Heart left ventricle (tissue), 16 donors: ENCODE measurements at regions of chrX and their contacts with region 1.

Region 1: DNA sequence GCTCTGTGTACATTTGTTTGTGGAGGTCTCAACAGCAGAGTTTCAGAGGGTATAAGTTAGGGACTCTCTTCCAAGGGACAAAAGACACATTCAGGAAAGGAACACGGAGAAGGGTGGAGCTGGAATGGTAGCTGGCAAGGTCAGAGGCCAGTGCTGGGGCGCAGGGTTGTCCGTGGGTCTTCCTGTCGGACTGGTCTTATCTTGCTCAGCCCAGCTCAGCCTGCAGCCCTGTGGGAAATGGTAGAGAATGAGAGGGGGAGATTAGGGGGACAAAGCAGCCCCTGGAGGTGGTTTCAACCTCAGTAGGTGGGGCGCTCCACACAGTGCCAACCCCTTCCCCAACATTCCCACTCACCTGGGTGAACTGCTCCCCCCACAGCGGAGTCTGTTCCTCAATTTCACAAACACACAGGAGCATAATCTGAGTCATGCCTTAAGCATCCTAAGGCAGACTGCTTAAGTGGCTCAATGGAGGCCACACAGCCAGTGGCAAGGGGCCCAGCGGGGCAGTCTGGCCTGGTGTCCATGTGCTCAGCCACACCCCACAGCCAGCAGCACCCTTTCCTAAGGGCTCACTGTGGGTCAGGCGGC is 6.9 kb upstream of the HDAC6 start:
- DNase-seq: no peak
- ATAC-seq: no peak
- H3K4me3 ChIP-seq: no peak overlapping the region
- H3K27ac ChIP-seq: no peak overlapping the region
- H3K4me1 ChIP-seq: no peaks in the 10 kb centered on the region
- H3K27me3 ChIP-seq: peaks cover 0 to 3% (median 0%) of the 10 kb centered on the region in 9 donors
- CTCF ChIP-seq: no peak
- POLR2A ChIP-seq: no peak

Region 2: DNA sequence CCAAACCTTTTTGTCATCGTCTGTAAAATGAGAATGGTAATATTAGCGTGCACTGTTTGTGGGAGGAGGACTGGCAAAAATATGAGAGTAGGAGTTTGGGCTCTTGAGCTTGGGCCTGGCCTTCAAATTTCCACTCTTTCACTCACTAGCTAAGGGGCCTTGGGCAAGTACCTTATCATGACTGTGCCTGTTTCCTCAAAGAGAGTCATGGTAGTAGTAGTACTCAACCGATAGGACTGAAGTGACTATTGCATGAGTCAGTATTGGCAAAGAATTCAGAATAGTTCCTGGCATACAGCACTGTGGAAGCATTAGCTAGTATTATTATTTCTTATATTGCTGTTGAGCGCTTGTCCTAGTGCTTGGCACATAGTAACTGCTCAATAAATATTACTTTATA is 236.7 kb before region 1 on chrX:
- intact Hi-C with region 1: no loop called
- DNase-seq: no peak
- ATAC-seq: peak; percentile 39 to 86 (median 72)
- H3K4me3 ChIP-seq: no peak overlapping the region
- H3K27ac ChIP-seq: peak overlapping the region in 2 of 12 donors; percentile 19 to 24
- H3K4me1 ChIP-seq: no peaks in the 10 kb centered on the region
- H3K27me3 ChIP-seq: no peaks in the 10 kb centered on the region
- CTCF ChIP-seq: no peak
- POLR2A ChIP-seq: no peak

Region 3: DNA sequence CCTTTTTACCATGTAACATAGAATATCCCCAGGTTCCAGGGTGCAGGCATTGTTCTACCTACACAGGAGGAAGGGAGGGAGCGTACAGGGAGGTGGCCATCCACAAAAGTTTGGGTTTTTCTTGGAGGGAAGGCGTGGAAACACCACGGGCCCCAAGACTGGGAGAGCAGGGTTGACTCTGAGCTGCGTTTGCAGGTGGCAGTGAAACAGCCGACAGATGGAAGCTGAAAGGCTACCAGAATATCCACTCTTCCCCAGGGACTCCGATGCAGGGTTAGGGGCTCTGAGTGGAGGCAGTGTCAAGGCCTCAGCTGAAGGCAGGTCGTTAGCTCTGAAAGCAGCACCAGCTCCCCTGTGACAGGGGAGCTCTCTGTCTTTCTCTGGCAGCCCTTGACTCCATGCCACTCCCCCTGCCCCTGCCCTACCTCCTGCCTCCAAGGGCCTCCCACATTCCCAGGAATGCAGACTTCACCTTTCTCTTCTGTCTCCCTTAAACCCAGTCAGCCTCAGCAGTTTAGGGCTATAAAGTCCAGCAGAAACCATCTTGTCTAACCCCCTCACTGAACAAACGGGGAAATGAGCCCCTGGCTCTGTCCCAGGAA is 47.5 kb before region 1 on chrX:
- intact Hi-C with region 1: loop called in 2 of 10 experiments (anchors 5 to 10 kb)
- DNase-seq: no peak
- ATAC-seq: no peak
- H3K4me3 ChIP-seq: no peak overlapping the region
- H3K27ac ChIP-seq: no peak overlapping the region
- H3K4me1 ChIP-seq: no peaks in the 10 kb centered on the region
- H3K27me3 ChIP-seq: no peaks in the 10 kb centered on the region
- CTCF ChIP-seq: no peak
- POLR2A ChIP-seq: no peak

Region 4: GRCh38 chrX:48826135-48826875 is 31.3 kb after region 1 on chrX and contains the start of gene ERAS:
- intact Hi-C with region 1: no loop called
- DNase-seq: no peak
- ATAC-seq: no peak
- H3K4me3 ChIP-seq: no peak within 1 kb of the TSS
- H3K27ac ChIP-seq: no peak within 1 kb of the TSS
- H3K4me1 ChIP-seq: no peaks in the 10 kb centered on the region
- H3K27me3 ChIP-seq: peaks cover 0 to 46% (median 2%) of the 10 kb centered on the region in 9 donors
- CTCF ChIP-seq: no peak
- POLR2A ChIP-seq: no peak
- total RNA-seq, gene ERAS: not detected